Pancreas (tissue), 10 donors: ENCODE measurements at regions of chr5 and their contacts with region 1.

Region 1: DNA sequence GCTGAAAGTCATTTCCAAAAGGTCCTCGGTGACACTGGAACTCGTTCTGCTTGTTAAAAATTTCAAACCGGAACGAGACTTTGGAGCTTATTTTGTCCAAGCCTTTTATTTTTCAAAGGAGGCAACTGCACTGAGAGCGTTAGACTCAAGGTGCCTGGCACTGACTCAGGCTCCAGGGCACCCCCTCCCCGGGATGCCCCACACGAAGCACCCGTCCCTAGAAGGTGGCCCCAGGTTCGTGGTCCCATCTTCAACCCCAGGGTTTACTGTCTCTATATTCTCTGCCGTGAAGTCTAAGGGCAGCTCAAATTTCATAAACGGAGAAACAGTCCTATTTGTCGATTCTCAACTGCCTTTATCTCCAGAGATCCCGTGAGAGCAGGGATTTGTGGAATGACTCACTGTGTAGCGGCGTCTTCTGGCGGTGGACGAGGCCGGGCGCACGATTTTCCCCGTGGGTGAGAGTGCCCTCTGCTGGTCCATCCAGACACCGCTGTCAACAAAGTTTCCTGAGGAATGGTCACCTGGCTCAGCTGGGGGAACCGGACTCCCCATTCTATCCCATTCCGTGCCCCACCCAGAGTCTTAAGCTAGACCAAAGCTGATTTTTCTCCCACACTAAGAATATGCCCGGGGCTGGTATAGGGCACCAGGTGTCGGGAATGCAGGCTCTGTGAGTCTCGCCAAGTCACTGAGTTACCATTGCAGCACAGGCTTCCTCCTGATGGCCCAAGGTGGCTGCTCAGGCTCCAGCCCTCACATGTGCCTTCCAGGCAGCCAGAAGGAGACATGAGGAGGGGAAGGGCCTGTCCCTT is 27.1 kb upstream of the SLC6A19 start:
- DNase-seq: peak; percentile 44 to 86 (median 73)
- ATAC-seq: peak; percentile 66 to 95 (median 90)
- H3K4me3 ChIP-seq: no peak overlapping the region
- H3K27ac ChIP-seq: no peak overlapping the region
- H3K4me1 ChIP-seq: no peaks in the 10 kb centered on the region
- H3K27me3 ChIP-seq: no peaks in the 10 kb centered on the region
- CTCF ChIP-seq: peak; percentile 33 to 65 (median 60)

Region 2: GRCh38 chr5:1652596-1653345 is 478.4 kb after region 1 on chr5:
- intact Hi-C with region 1: loop called in 2 of 3 experiments (anchors 10 kb)
- DNase-seq: peak in 1 of 6 donors; percentile 68
- ATAC-seq: no peak
- H3K4me3 ChIP-seq: no peak overlapping the region
- H3K27ac ChIP-seq: no peak overlapping the region
- H3K4me1 ChIP-seq: no peaks in the 10 kb centered on the region
- H3K27me3 ChIP-seq: peaks cover 0 to 15% (median 0%) of the 10 kb centered on the region in 4 donors
- CTCF ChIP-seq: no peak